Left ventricle myocardium inferior (tissue), 1 donor: ENCODE measurements at regions of chr12 and their contacts with region 1.

Region 1: DNA sequence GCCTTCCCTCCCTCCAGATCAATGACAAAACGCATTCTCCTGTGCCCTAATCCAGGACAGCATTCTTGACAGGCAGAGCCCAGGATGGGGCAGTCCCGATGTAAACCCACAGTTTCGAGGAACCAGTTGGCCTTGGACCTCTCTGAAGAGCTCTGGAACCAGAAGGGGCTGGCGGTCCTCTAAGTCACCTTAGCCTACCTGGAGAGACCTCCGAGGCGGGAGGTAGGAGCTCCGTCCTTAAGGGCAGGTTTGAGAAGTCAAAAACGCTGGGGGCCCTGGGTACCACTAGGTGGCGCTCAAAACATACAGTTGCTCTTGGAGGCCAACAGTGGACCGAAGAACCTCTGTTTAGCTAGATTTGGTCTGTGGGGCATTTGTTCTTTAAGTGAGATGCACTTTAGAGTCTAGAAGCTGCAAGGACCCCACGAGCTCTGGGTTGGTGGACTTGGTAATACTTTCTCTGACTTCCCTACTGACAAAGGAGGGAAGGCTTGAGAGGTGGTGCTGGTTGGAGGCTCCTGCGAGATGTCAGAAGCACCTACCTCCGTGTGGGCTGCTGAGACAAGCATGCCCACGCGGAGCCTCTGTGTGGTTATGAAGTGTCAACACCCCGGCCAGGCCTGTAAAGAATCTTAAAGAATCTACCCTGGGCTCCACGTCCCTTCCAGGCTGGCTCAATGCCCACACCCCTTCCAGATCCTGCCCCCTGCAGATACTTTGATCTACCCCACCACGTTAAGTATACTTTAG is 74.8 kb upstream of the CHST11 start:
- DNase-seq: peak; percentile 74
- H3K4me3 ChIP-seq: no peak overlapping the region
- H3K27ac ChIP-seq: no peak overlapping the region
- H3K4me1 ChIP-seq: peaks cover 7% of the 10 kb centered on the region
- H3K27me3 ChIP-seq: no peaks in the 10 kb centered on the region
- CTCF ChIP-seq: peak; percentile 98

Region 2: DNA sequence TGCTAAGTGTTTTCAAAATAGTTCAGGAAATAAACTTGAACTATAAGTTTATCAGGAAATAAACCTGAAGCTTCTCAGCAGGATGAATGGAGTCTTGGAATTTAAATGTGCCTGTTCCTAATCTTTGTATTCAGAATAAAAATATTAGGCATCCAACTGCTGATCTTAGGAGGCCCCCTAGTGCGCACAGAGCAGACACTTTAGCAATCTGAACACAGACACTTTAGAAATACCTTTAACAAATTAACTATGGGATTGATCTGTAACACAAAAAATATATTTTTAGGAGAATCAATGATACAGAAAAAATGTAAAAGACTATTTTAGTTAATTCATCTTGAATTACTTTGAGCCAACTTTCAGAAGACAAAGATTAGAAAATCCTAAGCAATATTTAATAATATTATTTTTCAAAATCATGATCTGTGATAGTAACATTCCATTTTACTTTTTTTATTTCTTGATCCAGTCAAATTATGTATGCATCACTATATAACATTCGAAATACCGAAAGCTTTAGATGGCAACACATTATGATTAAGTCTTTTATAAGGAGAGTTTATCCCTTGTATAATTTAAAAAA is 495.3 kb after region 1 on chr12:
- intact Hi-C with region 1: loop called (anchors 5 kb)
- DNase-seq: no peak
- H3K4me3 ChIP-seq: no peak overlapping the region
- H3K27ac ChIP-seq: no peak overlapping the region
- H3K4me1 ChIP-seq: no peaks in the 10 kb centered on the region
- H3K27me3 ChIP-seq: no peaks in the 10 kb centered on the region
- CTCF ChIP-seq: peak; percentile 78

Region 3: GRCh38 chr12:105053116-105053572 is 671.2 kb after region 1 on chr12:
- intact Hi-C with region 1: loop called (anchors 2 kb)
- DNase-seq: peak; percentile 58
- H3K4me3 ChIP-seq: no peak overlapping the region
- H3K27ac ChIP-seq: no peak overlapping the region
- H3K4me1 ChIP-seq: no peaks in the 10 kb centered on the region
- H3K27me3 ChIP-seq: no peaks in the 10 kb centered on the region
- CTCF ChIP-seq: peak; percentile 95